ENCODE measurements at regions of chr14 and their contacts with region 1.

Region 1: DNA sequence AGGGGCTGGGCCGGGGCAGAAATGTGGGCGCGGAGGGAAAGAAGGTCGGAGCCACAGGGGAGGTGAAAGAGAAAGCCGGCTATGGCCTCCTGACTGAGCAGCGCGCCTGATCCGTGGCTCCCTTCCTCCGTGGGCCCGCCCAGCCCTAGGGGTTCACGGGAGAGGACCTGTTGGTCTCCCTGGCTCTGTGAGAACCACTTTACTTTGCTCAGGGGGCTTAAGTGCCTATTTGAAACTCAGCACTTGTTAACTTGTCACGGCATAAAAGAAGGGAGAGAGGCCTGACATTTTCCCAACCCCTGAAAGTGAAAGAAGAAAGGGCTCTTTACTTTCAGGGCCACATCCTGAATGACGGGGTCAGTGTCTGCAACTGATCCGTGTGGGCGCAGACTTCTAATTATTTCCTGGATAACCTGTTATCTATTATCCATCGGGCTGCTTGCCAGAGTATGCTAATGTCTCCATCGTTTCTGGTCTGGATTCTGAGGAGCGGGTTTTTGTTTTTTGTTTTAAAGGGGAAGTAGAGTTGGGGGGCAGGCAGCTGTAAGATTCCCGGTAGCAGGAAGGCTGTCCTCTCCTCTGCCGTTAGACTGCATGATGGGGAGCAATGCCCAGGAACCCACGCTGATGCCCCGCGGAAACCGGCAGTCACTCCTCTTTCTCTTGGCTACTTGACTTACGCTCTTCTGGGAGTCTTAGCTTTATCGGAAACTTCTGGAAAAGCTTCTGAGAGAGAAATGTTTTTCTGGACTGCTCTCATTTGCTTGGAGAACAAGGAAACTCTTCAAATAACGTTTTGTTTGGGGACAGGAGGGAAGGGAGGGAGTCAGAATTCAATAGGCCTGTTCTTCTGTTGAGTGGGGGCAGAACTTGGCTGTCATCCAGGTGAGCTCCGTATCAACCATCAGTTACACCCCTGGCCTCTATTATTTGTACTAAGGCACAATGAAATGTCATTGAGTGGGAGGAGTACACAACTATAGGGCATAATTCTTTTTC is 127.7 kb upstream of the MAX start:
- DNase-seq: no peak
- ATAC-seq: peak; percentile 67
- H3K4me3 ChIP-seq: no peak overlapping the region
- H3K27ac ChIP-seq: peak overlapping the region; percentile 65
- H3K4me1 ChIP-seq: peaks cover 10% of the 10 kb centered on the region
- H3K27me3 ChIP-seq: no peaks in the 10 kb centered on the region
- CTCF ChIP-seq: no peak
- POLR2A ChIP-seq: no peak
- RAD21 ChIP-seq: no peak

Region 2: DNA sequence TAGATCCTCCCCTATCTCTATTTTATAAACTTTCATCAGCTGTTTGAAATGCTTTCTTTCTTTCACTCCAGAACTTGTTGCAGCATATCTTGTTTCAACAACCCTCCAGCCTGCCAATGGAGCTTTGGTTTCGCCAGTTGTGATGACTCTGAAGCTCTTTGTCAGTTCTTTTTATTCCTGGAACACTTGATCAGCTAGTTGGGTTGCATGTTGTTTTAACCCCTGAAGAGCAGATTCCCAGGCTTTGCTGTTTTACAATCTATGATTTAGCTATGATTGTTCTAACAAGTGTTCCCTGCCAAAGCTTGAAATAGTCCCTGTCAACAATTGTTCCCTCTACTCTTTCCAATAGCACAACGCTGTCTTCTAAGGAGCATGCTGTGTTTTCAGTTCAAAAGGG is 131.9 kb after region 1 on chr14:
- CTCF ChIA-PET with region 1: no interaction called
- POLR2A ChIA-PET with region 1: no interaction called
- dilution Hi-C with region 1: no loop called
- in situ Hi-C with region 1: no loop called
- intact Hi-C with region 1: loop called (anchors 5 kb)
- DNase-seq: peak; percentile 90
- ATAC-seq: peak; percentile 84
- H3K4me3 ChIP-seq: no peak overlapping the region
- H3K27ac ChIP-seq: peak overlapping the region; percentile 58; the same call in 1 of the 2 replicates
- H3K4me1 ChIP-seq: no peaks in the 10 kb centered on the region
- H3K27me3 ChIP-seq: no peaks in the 10 kb centered on the region
- CTCF ChIP-seq: no peak
- POLR2A ChIP-seq: no peak
- RAD21 ChIP-seq: no peak

Measured in IMR-90 (cell line).